ENCODE measurements at regions of chr5 and their contacts with region 1.

Region 1: GRCh38 chr5:136769900-136770684 is 404.7 kb upstream of the TRPC7 start:
- DNase-seq: peak; percentile 70 to 75
- ATAC-seq: peak; percentile 83 to 96; a peak in 5 of 6 replicates
- H3K4me3 ChIP-seq: no peak overlapping the region
- H3K27ac ChIP-seq: no peak overlapping the region
- H3K4me1 ChIP-seq: no peaks in the 10 kb centered on the region
- CTCF ChIP-seq: peak; percentile 81
- EP300 ChIP-seq: no peak
- POLR2A ChIP-seq: no peak
- RAD21 ChIP-seq: peak; percentile 92 to 99

Region 2: DNA sequence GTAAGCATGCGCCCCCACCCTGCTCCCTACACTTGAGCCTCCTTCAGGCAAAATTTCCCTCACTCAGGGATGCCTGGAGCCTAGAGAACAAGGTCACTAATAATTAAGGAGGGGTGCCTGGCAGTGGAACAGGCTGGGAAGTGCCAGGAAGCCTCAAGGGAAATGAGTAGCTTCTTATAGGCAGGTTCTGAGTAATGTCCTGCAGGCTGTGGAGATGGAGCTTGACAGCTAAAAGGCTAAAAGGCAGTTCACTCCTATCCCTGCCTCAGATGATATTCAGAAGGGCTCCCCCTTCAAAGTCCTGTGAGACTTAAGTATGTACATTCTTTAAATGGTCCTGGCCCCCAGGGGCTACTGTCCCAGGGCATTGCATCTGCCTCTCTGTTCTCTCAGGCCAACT is 511.6 kb before region 1 on chr5:
- CTCF ChIA-PET with region 1: interaction called, 13 read pairs
- POLR2A ChIA-PET with region 1: no interaction called
- DNase-seq: no peak
- ATAC-seq: no peak
- H3K4me3 ChIP-seq: no peak overlapping the region
- H3K27ac ChIP-seq: no peak overlapping the region
- H3K4me1 ChIP-seq: no peaks in the 10 kb centered on the region
- CTCF ChIP-seq: no peak
- EP300 ChIP-seq: no peak
- POLR2A ChIP-seq: no peak
- RAD21 ChIP-seq: no peak

Region 3: GRCh38 chr5:136364307-136364706 is 405.8 kb before region 1 on chr5:
- CTCF ChIA-PET with region 1: interaction called, 132 read pairs
- POLR2A ChIA-PET with region 1: no interaction called
- DNase-seq: peak; percentile 7 to 10
- ATAC-seq: peak in 1 of 2 experiments; percentile 60; a peak in 2 of 6 replicates
- H3K4me3 ChIP-seq: no peak overlapping the region
- H3K27ac ChIP-seq: no peak overlapping the region
- H3K4me1 ChIP-seq: no peaks in the 10 kb centered on the region
- CTCF ChIP-seq: peak; percentile 56
- EP300 ChIP-seq: no peak
- POLR2A ChIP-seq: no peak
- RAD21 ChIP-seq: peak; percentile 61 to 63

Region 4: DNA sequence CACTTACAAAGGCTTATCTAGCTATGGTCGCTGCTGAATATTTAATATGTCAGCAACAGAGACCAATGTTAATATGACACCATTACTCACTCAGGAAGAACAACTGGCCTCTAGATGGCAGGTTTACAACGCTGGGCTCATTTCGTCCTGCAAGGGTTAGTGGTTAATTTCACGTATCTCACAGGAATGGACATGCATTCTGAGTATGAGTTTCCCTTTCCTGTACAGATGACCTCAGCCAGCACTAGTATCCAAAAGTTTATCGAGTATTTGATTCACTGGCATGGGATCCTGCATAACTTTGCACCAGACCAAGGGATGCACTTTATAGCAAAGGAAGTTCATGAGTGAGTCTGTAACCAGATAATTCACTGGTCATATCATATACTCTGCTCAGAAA is 396.1 kb before region 1 on chr5:
- CTCF ChIA-PET with region 1: interaction called, 16 read pairs
- POLR2A ChIA-PET with region 1: no interaction called
- DNase-seq: peak in 1 of 2 experiments; percentile 30
- ATAC-seq: peak; percentile 56 to 75; a peak in 4 of 6 replicates
- H3K4me3 ChIP-seq: no peak overlapping the region
- H3K27ac ChIP-seq: no peak overlapping the region
- H3K4me1 ChIP-seq: no peaks in the 10 kb centered on the region
- CTCF ChIP-seq: peak; percentile 37
- EP300 ChIP-seq: no peak
- POLR2A ChIP-seq: no peak
- RAD21 ChIP-seq: peak; percentile 34 to 65; a peak in 4 of 5 replicates

Region 5: DNA sequence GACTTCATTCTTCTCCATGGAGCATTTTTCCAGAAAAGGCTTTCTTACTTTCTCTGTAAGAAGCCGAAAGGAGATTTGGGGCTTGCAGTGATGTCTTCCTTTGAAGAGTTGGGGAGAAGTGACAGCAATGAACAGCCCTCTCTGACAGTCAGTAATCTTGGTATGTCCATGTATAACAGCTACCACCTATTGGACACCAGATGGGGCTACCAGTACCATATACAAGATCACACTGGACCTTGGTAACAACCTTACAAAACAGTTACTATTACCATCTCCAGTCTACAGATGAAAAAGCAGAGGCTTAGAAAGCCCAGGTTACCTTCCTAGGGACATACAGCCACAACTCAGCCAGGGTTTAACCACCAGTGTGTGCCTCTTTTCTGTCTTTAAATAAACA is 132.0 kb before region 1 on chr5:
- CTCF ChIA-PET with region 1: interaction called, 17 read pairs
- POLR2A ChIA-PET with region 1: interaction called, 3 read pairs
- DNase-seq: no peak
- ATAC-seq: peak in 1 of 2 experiments; percentile 60; a peak in 3 of 6 replicates
- H3K4me3 ChIP-seq: no peak overlapping the region
- H3K27ac ChIP-seq: no peak overlapping the region
- H3K4me1 ChIP-seq: no peaks in the 10 kb centered on the region
- CTCF ChIP-seq: no peak
- EP300 ChIP-seq: no peak
- POLR2A ChIP-seq: no peak
- RAD21 ChIP-seq: peak in 1 of 2 experiments; percentile 23; a peak in 2 of 5 replicates

Region 6: GRCh38 chr5:136734628-136735027 is 35.5 kb before region 1 on chr5:
- CTCF ChIA-PET with region 1: interaction called, 11 read pairs
- POLR2A ChIA-PET with region 1: no interaction called
- DNase-seq: no peak
- ATAC-seq: no peak
- H3K4me3 ChIP-seq: no peak overlapping the region
- H3K27ac ChIP-seq: no peak overlapping the region
- H3K4me1 ChIP-seq: peaks cover 22% of the 10 kb centered on the region
- CTCF ChIP-seq: no peak
- EP300 ChIP-seq: no peak
- POLR2A ChIP-seq: no peak
- RAD21 ChIP-seq: no peak

Region 7: GRCh38 chr5:136780522-136780921 is 10.4 kb after region 1 on chr5:
- CTCF ChIA-PET with region 1: interaction called, 18 read pairs
- POLR2A ChIA-PET with region 1: no interaction called
- DNase-seq: peak in 1 of 2 experiments; percentile 22
- ATAC-seq: 0 out of 6 replicates have a peak, but pooled peaks of 1 of the 2 experiments have one; percentile 50
- H3K4me3 ChIP-seq: no peak overlapping the region
- H3K27ac ChIP-seq: no peak overlapping the region
- H3K4me1 ChIP-seq: no peaks in the 10 kb centered on the region
- CTCF ChIP-seq: peak; percentile 28; the same call in 2 of the 3 replicates
- EP300 ChIP-seq: no peak
- POLR2A ChIP-seq: no peak
- RAD21 ChIP-seq: peak; percentile 52 to 62; a peak in 4 of 5 replicates